AG04449 (cell line): ENCODE measurements at regions of chr7 and their contacts with region 1.

Region 1: DNA sequence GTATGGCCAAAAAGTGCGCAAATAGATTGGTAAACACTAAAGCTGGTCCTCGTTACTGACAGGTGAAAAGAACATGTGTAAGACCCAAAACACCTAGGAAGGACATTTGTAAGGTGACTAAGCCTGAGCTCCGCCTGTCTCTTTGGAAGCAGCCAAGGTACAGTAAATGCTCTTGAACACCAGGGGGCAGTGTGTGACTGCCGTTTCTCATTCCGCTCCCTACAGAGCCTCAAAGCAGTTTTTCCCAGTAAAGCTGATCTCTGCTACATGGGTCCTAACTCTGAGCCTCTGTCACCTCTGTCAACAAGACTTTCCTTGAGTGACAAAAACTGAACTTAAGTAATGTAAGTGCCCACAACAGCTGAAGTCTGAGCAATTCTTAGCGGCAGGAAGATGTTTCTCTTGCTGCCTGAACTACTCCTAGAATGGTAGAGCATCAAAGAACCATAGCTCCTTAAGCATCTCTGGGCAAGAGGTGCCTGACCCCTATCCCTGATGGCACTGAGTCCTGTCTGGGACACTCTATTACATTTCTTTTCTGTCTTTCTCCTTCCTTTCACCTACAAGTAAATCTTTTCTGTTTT is 238.0 kb upstream of the INHBA start:
- DNase-seq: no peak
- H3K4me3 ChIP-seq: no peak overlapping the region
- CTCF ChIP-seq: peak; percentile 83

Region 2: GRCh38 chr7:41711283-41712064 is 229.4 kb before region 1 on chr7:
- CTCF ChIA-PET with region 1: interaction called, 27 read pairs
- POLR2A ChIA-PET with region 1: no interaction called
- DNase-seq: no peak
- H3K4me3 ChIP-seq: no peak overlapping the region
- CTCF ChIP-seq: peak; percentile 3

Region 3: GRCh38 chr7:41930538-41931262 is 10.2 kb before region 1 on chr7:
- CTCF ChIA-PET with region 1: interaction called, 161 read pairs
- POLR2A ChIA-PET with region 1: no interaction called
- DNase-seq: no peak
- H3K4me3 ChIP-seq: no peak overlapping the region
- CTCF ChIP-seq: no peak

Region 4: GRCh38 chr7:42035210-42035609 is 94.4 kb after region 1 on chr7:
- CTCF ChIA-PET with region 1: no interaction called
- POLR2A ChIA-PET with region 1: no interaction called
- DNase-seq: no peak
- H3K4me3 ChIP-seq: no peak overlapping the region
- CTCF ChIP-seq: no peak

Region 5: DNA sequence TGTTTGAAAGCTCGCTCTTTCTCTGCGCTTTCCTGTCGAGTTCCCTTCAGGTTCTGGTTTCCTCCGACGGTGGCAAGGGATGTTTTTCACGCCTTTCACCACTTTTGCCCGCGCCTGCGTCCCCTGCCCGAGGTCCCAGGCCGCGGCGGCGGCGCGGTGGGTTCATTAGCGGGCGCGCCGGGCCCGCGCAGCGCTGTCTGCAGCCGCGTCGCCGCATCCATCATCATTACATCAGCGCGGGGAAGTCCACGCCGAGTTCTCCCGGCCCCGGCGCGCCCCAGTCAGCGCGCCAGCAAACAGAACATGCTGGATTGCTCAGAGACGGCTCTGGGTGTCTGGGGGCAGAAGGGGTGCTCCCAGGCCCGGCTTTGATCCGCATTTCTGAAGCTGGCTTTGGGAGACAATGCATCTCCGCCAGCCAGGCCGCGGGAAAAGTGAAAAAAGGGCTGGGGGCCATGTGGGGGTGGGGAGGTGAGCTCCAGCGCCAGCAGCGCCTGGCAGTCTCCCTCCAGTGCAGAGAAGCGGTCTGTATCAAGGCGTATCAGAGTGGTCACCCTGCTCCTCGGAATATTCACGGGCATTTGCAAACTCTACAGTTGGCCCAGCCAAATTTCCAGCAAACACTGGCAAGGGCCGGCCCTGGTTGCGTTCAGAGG is 287.2 kb after region 1 on chr7:
- CTCF ChIA-PET with region 1: interaction called, 10 read pairs
- POLR2A ChIA-PET with region 1: no interaction called
- DNase-seq: no peak
- H3K4me3 ChIP-seq: peak overlapping the region; percentile 42
- CTCF ChIP-seq: no peak

Region 6: DNA sequence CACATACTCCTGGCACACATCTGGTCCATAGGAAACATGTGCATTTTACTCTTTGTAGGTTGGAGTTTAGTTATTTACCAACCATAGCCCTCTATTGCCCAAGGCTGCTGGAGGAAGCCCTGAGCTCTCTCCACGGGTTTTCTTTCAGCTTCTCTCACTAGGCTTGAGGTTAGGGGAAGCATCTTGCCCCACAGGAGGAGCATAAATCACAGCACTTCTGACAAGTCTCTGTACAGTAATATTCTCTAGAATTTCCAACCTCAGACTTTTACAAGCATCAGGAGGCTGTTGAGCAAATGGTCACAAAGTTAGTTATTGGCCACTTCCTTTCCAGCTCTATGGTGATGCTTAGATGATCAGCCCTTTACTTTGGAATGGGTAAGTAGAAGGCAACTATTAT is 419.1 kb after region 1 on chr7:
- CTCF ChIA-PET with region 1: no interaction called
- POLR2A ChIA-PET with region 1: no interaction called
- DNase-seq: no peak
- H3K4me3 ChIP-seq: no peak overlapping the region
- CTCF ChIP-seq: no peak

Region 7: DNA sequence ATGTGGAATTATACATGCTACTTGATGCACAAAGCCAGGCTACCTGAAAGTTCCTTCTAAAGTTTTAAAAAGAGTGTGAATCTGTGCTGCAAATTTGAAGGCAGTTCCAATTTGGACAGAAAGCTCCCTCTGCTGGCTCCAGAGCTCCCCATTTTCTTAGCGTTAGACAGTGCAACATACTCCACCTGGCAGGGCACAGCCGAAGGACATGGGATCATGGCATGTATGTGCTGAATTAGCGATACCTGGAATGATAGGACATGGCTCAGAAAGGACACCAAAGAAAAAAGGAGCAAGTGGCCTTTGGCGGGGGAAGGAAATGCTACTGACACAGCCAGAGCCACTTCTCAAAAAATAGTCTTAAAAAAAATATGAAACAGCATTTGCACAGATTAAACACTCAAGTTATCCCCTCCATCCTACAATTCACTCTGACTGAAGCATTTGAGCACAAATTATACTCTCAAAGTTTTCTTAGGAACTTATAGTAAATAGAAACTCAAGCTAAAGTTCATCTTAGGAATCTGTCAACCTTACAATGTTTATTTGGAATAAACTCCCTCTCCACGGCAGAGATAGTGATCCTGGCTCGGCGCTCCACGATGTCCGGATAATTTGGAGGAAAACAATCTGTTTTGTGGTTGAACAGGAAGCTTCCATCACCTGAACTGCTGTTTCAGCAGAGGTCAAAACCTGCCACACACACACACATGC is 891.0 kb after region 1 on chr7:
- CTCF ChIA-PET with region 1: interaction called, 95 read pairs
- POLR2A ChIA-PET with region 1: no interaction called
- DNase-seq: no peak
- H3K4me3 ChIP-seq: no peak overlapping the region
- CTCF ChIP-seq: peak; percentile 63

Region 8: GRCh38 chr7:42886129-42886528 is 945.3 kb after region 1 on chr7:
- CTCF ChIA-PET with region 1: interaction called, 14 read pairs
- POLR2A ChIA-PET with region 1: no interaction called
- DNase-seq: no peak
- H3K4me3 ChIP-seq: no peak overlapping the region
- CTCF ChIP-seq: no peak